Mucosa of descending colon (tissue), 3 donors: ENCODE measurements at regions of chr5 and their contacts with region 1.

Region 1: GRCh38 chr5:98905857-98906690 is 22.7 kb downstream of the CHD1 start:
- DNase-seq: no peak
- ATAC-seq: peak; percentile 67
- H3K4me3 ChIP-seq: no peak overlapping the region
- H3K4me1 ChIP-seq: peaks cover 4% of the 10 kb centered on the region
- CTCF ChIP-seq: no peak

Region 2: GRCh38 chr5:99032234-99033013 is 126.3 kb after region 1 on chr5:
- intact Hi-C with region 1: loop called (anchors 2 to 10 kb)
- DNase-seq: peak in 2 of 3 donors; percentile 55 to 88
- ATAC-seq: peak; percentile 76
- H3K4me3 ChIP-seq: no peak overlapping the region
- H3K4me1 ChIP-seq: peaks cover 18% of the 10 kb centered on the region
- CTCF ChIP-seq: peak; percentile 42

Region 3: GRCh38 chr5:99060306-99061261 is 154.5 kb after region 1 on chr5:
- intact Hi-C with region 1: loop called in 1 of 2 experiments (anchors 10 kb)
- DNase-seq: peak; percentile 70 to 95 (median 87)
- ATAC-seq: peak; percentile 89
- H3K4me3 ChIP-seq: no peak overlapping the region
- H3K4me1 ChIP-seq: no peaks in the 10 kb centered on the region
- CTCF ChIP-seq: peak; percentile 76